H1 (cell line): ENCODE measurements at regions of chr22 and their contacts with region 1.

Region 1: GRCh38 chr22:28759861-28760560 is 12.5 kb upstream of the CCDC117 start:
- DNase-seq: peak in 1 of 2 experiments; percentile 41
- H3K4me3 ChIP-seq: peak overlapping the region in 2 of 4 experiments; percentile 8 to 46; a peak in 3 of 8 replicates
- H3K27ac ChIP-seq: peak overlapping the region; percentile 93
- H3K4me1 ChIP-seq: peaks cover 0 to 10% (median 5%) of the 10 kb centered on the region in 4 experiments; a peak in 5 of 7 replicates
- H3K27me3 ChIP-seq: no peaks in the 10 kb centered on the region
- CTCF ChIP-seq: no peak
- EP300 ChIP-seq: no peak
- POLR2A ChIP-seq: peak in 1 of 2 experiments; percentile 43; a peak in 1 of 3 replicates
- RAD21 ChIP-seq: no peak

Region 2: DNA sequence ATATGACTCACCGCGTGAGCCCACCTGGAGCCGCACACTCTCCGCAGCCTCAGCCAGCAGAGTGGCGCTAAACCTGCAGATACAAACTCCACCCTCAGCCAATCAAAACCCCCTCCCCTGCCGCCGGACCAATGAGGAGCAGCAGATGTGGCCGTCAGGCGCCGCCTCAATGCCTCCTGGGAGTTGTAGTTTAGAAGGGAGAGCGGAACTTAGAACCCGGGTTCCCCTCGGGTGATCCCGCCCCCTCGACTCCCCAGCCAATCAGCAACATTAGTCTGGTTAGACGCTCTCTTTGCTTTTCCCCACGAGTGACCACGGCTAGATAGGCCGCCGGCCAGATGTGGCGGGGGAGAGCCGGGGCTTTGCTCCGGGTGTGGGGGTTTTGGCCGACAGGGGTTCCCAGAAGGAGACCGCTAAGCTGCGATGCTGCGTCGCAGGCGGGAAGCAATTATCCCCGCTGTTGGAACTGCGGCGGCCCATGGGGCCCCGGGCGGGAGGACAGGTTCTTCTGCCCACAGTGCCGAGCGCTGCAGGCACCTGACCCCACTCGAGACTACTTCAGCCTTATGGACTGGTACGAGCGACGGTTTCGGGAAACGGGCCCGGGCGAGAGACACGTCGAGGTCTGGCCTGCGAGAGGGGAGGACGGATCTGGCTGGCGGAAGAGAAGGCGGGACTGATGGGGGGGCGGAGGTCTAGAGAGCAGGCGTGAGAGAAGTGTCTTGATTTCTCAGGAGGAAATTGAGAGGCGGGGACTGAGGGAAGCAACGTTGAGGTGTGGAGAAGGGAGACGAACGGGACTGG is 18.1 kb before region 1 on chr22 and contains the starts of genes CHEK2 and HSCB:
- CTCF ChIA-PET with region 1: interaction called, 6 read pairs
- POLR2A ChIA-PET with region 1: interaction called, 15 read pairs
- DNase-seq: peak; percentile 92 to 98
- H3K4me3 ChIP-seq: peak within 1 kb of the TSS; percentile 91 to 98 (median 92)
- H3K27ac ChIP-seq: peak within 1 kb of the TSS; percentile 61
- H3K4me1 ChIP-seq: peaks cover 0 to 7% (median 3%) of the 10 kb centered on the region in 4 experiments; a peak in 3 of 7 replicates
- H3K27me3 ChIP-seq: no peaks in the 10 kb centered on the region
- CTCF ChIP-seq: peak; percentile 17 to 37 (median 24); a peak in 3 of 4 replicates
- EP300 ChIP-seq: no peak; a peak in 1 of 3 replicates
- POLR2A ChIP-seq: peak; percentile 65 to 66; a peak in 2 of 3 replicates
- RAD21 ChIP-seq: no peak
- total RNA-seq, gene CHEK2: 73.8 and 74.9 TPM in 2 replicates
- total RNA-seq, gene HSCB: 15.4 and 16.6 TPM in 2 replicates

Region 3: GRCh38 chr22:28772633-28773460 is 12.8 kb after region 1 on chr22 and contains the start of gene CCDC117:
- CTCF ChIA-PET with region 1: interaction called, 6 read pairs
- POLR2A ChIA-PET with region 1: interaction called, 31 read pairs
- DNase-seq: peak; percentile 89 to 92
- H3K4me3 ChIP-seq: peak within 1 kb of the TSS; percentile 71 to 77 (median 73)
- H3K27ac ChIP-seq: peak within 1 kb of the TSS; percentile 91; the same call in 1 of the 2 replicates
- H3K4me1 ChIP-seq: peaks cover 0 to 3% (median 0%) of the 10 kb centered on the region in 4 experiments; a peak in 2 of 7 replicates
- H3K27me3 ChIP-seq: no peaks in the 10 kb centered on the region
- CTCF ChIP-seq: peak in 2 of 3 experiments; percentile 8 to 43; a peak in 1 of 4 replicates
- EP300 ChIP-seq: no peak
- POLR2A ChIP-seq: peak in 1 of 2 experiments; percentile 82; a peak in 2 of 3 replicates
- RAD21 ChIP-seq: 0 out of 4 replicates have a peak, but pooled peaks of 1 of the 2 experiments have one; percentile 2
- total RNA-seq, gene CCDC117: 40.4 and 43.1 TPM in 2 replicates